Right cardiac atrium (tissue), 5 donors: ENCODE measurements at regions of chr12 and their contacts with region 1.

Region 1: GRCh38 chr12:127925971-127926370 is 341.0 kb upstream of the TMEM132C start:
- DNase-seq: peak in 2 of 3 donors; percentile 28 to 60
- ATAC-seq: peak; percentile 81 to 85
- H3K4me3 ChIP-seq: no peak overlapping the region
- H3K27ac ChIP-seq: no peak overlapping the region
- H3K4me1 ChIP-seq: peaks cover 5% of the 10 kb centered on the region
- H3K27me3 ChIP-seq: no peaks in the 10 kb centered on the region

Region 2: GRCh38 chr12:127677537-127678131 is 248.3 kb before region 1 on chr12:
- intact Hi-C with region 1: loop called in 1 of 4 experiments (anchors 10 kb)
- DNase-seq: peak; percentile 63 to 85 (median 74)
- ATAC-seq: peak; percentile 83 to 86
- H3K4me3 ChIP-seq: no peak overlapping the region
- H3K27ac ChIP-seq: no peak overlapping the region
- H3K4me1 ChIP-seq: no peaks in the 10 kb centered on the region
- H3K27me3 ChIP-seq: no peaks in the 10 kb centered on the region

Region 3: GRCh38 chr12:129579879-129580278 is 1653.9 kb after region 1 on chr12:
- intact Hi-C with region 1: no loop called
- DNase-seq: no peak
- ATAC-seq: no peak
- H3K4me3 ChIP-seq: no peak overlapping the region
- H3K27ac ChIP-seq: no peak overlapping the region
- H3K4me1 ChIP-seq: no peaks in the 10 kb centered on the region
- H3K27me3 ChIP-seq: no peaks in the 10 kb centered on the region